Ovary (tissue), 10 donors: ENCODE measurements at regions of chr5 and their contacts with region 1.

Region 1: DNA sequence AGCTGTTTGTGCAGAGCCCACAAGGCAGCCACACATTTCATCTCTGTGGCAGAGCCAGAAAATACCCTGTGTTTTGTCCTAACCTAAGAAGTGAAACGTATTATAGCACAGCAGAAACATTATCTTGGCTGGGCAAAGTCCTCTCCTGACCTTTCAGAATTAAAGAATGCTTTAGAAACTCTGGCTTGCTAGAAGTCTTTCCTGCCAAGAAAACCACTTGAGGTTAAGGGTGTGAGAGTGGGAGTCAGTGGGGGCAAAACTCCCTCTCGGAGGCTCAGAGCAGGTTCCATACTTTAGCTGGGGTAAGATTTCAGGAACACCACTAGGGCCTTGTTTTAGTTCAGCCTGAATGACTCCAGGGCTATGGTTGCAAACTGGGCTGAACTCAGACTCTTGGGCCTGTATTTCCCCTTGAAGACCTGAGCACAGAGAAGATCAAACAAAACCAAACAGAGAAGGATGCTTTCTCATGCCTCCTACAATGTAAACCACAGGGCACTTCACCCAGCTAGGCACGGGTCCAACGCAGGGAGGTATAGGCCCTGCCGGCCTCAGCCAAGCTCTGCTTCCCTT is 48.0 kb downstream of the ZNF366 start:
- DNase-seq: no peak
- H3K4me3 ChIP-seq: no peak overlapping the region
- H3K27ac ChIP-seq: no peak overlapping the region
- H3K4me1 ChIP-seq: peaks cover 8% of the 10 kb centered on the region
- H3K27me3 ChIP-seq: no peaks in the 10 kb centered on the region
- CTCF ChIP-seq: no peak
- EP300 ChIP-seq: no peak
- POLR2A ChIP-seq: no peak

Region 2: DNA sequence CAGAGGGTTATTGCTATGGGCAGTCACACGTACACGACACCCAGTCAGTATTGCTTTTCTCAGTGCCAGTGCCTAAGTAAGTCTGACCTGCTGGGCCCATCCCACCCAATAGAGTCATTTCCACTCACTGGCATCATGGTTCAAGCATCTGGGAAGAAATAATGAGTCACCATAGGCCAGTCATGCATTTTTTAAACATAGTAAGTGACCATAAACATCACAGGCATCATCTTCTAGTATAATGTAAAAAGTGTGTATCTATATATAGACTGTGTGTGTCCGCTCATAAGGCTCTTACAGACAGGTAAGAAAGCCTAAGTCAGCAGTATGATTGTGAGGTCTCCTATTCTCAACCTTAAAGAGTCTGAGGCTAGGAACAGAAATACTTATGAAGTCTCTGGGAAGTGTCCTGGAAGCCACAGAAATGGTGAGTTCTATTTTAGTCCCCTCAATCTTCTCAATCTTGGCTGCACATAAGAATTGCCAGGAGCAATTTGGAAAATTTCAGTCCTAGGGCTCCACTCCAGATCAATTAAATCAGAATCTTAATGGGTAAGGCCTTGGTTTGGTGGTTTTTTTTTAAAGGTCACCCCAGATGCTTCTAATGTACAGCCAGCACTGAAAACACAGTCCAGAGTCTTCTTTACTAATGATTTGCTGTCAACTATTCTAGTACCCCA is 17.2 kb before region 1 on chr5:
- intact Hi-C with region 1: no loop called
- DNase-seq: no peak
- H3K4me3 ChIP-seq: no peak overlapping the region
- H3K27ac ChIP-seq: no peak overlapping the region
- H3K4me1 ChIP-seq: peaks cover 9% of the 10 kb centered on the region
- H3K27me3 ChIP-seq: no peaks in the 10 kb centered on the region
- CTCF ChIP-seq: no peak
- EP300 ChIP-seq: no peak
- POLR2A ChIP-seq: no peak

Region 3: GRCh38 chr5:72556351-72557166 is 97.4 kb after region 1 on chr5:
- intact Hi-C with region 1: loop called in 1 of 4 experiments (anchors 5 kb)
- DNase-seq: peak; percentile 64 to 79 (median 67)
- H3K4me3 ChIP-seq: peak overlapping the region; percentile 27
- H3K27ac ChIP-seq: peak overlapping the region; percentile 54 to 72
- H3K4me1 ChIP-seq: no peaks in the 10 kb centered on the region
- H3K27me3 ChIP-seq: no peaks in the 10 kb centered on the region
- CTCF ChIP-seq: no peak
- EP300 ChIP-seq: no peak
- POLR2A ChIP-seq: no peak